ENCODE measurements at regions of chrX and their contacts with region 1.

Region 1: DNA sequence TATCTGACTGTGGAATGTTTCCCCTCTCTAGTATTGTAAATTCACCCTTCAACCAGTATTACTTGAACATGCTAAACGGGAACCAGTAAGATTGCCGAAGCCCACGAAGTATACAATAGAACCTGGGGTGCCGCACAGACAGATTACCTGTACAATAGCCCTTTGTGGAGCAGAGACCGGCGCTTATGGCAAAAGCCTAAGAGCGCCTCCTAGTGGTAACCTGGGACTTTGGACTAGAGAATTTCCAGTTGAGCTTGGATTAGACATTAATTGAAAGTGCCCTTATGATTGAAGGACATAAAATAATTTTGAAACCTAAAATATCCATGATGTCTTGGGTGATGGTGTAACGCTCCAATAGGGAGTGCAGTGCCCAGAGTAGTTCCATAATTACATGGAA is 14.1 kb downstream of the ZNF157 start:
- DNase-seq: peak; percentile 80
- ATAC-seq: peak; percentile 76
- H3K4me3 ChIP-seq: no peak overlapping the region
- H3K4me3 Mint-ChIP-seq: no peak overlapping the region
- H3K27ac ChIP-seq: no peak overlapping the region
- H3K27ac Mint-ChIP-seq: no peak overlapping the region
- H3K4me1 ChIP-seq: peaks cover 0 to 8% of the 10 kb centered on the region in 2 donors
- H3K4me1 Mint-ChIP-seq: peaks cover 11% of the 10 kb centered on the region
- H3K27me3 ChIP-seq: no peaks in the 10 kb centered on the region
- H3K27me3 Mint-ChIP-seq: no peaks in the 10 kb centered on the region
- CTCF ChIP-seq: peak; percentile 78

Region 2: DNA sequence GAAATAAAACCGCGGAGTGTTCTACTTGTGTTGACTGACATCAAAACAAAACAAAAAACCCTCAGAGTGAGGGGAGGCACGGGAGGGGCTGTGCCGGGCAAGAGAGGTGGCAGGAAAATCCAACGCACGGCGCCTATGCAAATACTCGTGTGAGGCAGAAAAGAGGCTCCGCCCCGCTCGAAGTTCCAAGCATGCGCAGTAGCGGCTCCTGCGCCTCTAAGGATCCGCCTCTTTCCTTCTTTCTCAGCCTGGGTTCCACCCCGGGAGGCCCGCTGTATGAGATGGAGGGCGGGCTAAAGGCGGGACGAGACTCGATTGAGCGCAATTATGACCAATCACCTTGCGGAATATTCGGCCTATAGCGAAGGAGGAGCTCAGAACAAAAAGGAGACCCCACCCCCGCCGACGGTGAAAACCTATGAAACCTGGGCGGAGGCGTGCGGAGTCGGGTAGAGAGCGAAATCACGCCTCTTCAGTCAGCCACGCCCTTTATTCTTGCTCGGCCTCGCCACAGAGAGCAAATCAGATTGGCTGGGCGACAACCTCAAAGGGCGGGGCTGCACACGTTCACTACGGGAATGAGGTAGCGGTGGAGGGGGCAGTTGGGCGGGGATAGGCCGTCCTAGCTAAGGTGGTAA is 166.7 kb before region 1 on chrX:
- CTCF ChIA-PET with region 1: interaction called, 6 read pairs
- POLR2A ChIA-PET with region 1: no interaction called
- intact Hi-C with region 1: loop called (anchors 1 kb)
- DNase-seq: peak; percentile 96
- ATAC-seq: peak; percentile 80
- H3K4me3 ChIP-seq: peak overlapping the region; percentile 69 to 83 (median 80)
- H3K4me3 Mint-ChIP-seq: peak overlapping the region; percentile 96
- H3K27ac ChIP-seq: peak overlapping the region; percentile 94 to 99
- H3K27ac Mint-ChIP-seq: peak overlapping the region; percentile 100
- H3K4me1 ChIP-seq: peaks cover 26 to 27% of the 10 kb centered on the region in 2 donors
- H3K4me1 Mint-ChIP-seq: peaks cover 39% of the 10 kb centered on the region
- H3K27me3 ChIP-seq: no peaks in the 10 kb centered on the region
- H3K27me3 Mint-ChIP-seq: no peaks in the 10 kb centered on the region
- CTCF ChIP-seq: no peak

Region 3: GRCh38 chrX:47523297-47523696 is 138.8 kb after region 1 on chrX:
- CTCF ChIA-PET with region 1: interaction called, 38 read pairs
- POLR2A ChIA-PET with region 1: no interaction called
- intact Hi-C with region 1: loop called (anchors 1 kb)
- DNase-seq: peak; percentile 87
- ATAC-seq: peak; percentile 99
- H3K4me3 ChIP-seq: peak overlapping the region in 4 of 5 experiments; percentile 51 to 60 (median 57)
- H3K4me3 Mint-ChIP-seq: peak overlapping the region; percentile 71
- H3K27ac ChIP-seq: no peak overlapping the region
- H3K27ac Mint-ChIP-seq: peak overlapping the region; percentile 70
- H3K4me1 ChIP-seq: peaks cover 0 to 8% of the 10 kb centered on the region in 2 donors
- H3K4me1 Mint-ChIP-seq: peaks cover 5% of the 10 kb centered on the region
- H3K27me3 ChIP-seq: no peaks in the 10 kb centered on the region
- H3K27me3 Mint-ChIP-seq: no peaks in the 10 kb centered on the region
- CTCF ChIP-seq: peak; percentile 78

Measured in B cell (primary cell).